Naive thymus-derived CD4-positive, alpha-beta T cell (primary cell): ENCODE measurements at regions of chr2 and their contacts with region 1.

Region 1: GRCh38 chr2:147639891-147640290 is 204.9 kb upstream of the ACVR2A start:
- DNase-seq: no peak
- ATAC-seq: no peak
- H3K4me3 ChIP-seq: no peak overlapping the region
- H3K4me3 Mint-ChIP-seq: no peak overlapping the region
- H3K27ac ChIP-seq: no peak overlapping the region
- H3K27ac Mint-ChIP-seq: no peak overlapping the region
- H3K4me1 ChIP-seq: no peaks in the 10 kb centered on the region
- H3K4me1 Mint-ChIP-seq: peaks cover 0 to 14% (median 4%) of the 10 kb centered on the region in 7 donors
- H3K27me3 ChIP-seq: no peaks in the 10 kb centered on the region
- H3K27me3 Mint-ChIP-seq: peaks cover 0 to 3% (median 0%) of the 10 kb centered on the region in 5 donors

Region 2: DNA sequence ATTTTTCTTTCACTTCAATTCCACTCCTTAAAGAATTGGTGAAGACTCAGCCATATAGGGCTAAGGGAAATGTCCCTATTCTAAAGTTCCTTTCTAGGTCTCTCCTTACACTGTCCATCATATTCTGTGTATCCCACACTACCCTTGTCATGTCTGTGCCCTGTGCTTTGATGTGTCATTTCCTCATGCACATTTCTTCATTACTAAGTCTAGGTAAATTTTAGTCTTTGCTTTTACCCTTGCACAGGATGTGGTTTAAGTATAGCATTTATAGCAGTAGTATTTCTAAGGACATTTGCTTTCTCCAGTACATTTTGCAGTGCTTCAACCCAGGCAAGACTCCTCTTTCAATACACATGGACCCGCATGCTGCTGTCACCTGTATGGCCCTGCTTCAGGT is 16.6 kb before region 1 on chr2:
- CTCF ChIA-PET with region 1: interaction called, 3 read pairs
- POLR2A ChIA-PET with region 1: no interaction called
- intact Hi-C with region 1: loop called in 1 of 2 experiments (anchors 2 kb)
- DNase-seq: peak in 7 of 9 donors; percentile 12 to 64 (median 41)
- ATAC-seq: peak; percentile 88
- H3K4me3 ChIP-seq: no peak overlapping the region
- H3K4me3 Mint-ChIP-seq: peak overlapping the region; percentile 1 to 63 (median 37)
- H3K27ac ChIP-seq: no peak overlapping the region
- H3K27ac Mint-ChIP-seq: peak overlapping the region; percentile 4 to 76 (median 36)
- H3K4me1 ChIP-seq: peaks cover 0 to 23% of the 10 kb centered on the region in 2 donors
- H3K4me1 Mint-ChIP-seq: peaks cover 12 to 36% (median 25%) of the 10 kb centered on the region in 7 donors
- H3K27me3 ChIP-seq: no peaks in the 10 kb centered on the region
- H3K27me3 Mint-ChIP-seq: no peaks in the 10 kb centered on the region

Region 3: GRCh38 chr2:147968571-147968970 is 328.7 kb after region 1 on chr2:
- CTCF ChIA-PET with region 1: no interaction called
- POLR2A ChIA-PET with region 1: no interaction called
- intact Hi-C with region 1: no loop called
- DNase-seq: no peak
- ATAC-seq: no peak
- H3K4me3 ChIP-seq: no peak overlapping the region
- H3K4me3 Mint-ChIP-seq: no peak overlapping the region
- H3K27ac ChIP-seq: no peak overlapping the region
- H3K27ac Mint-ChIP-seq: peak overlapping the region in 1 of 9 donors; percentile 22
- H3K4me1 ChIP-seq: no peaks in the 10 kb centered on the region
- H3K4me1 Mint-ChIP-seq: peaks cover 0 to 33% (median 8%) of the 10 kb centered on the region in 7 donors
- H3K27me3 ChIP-seq: no peaks in the 10 kb centered on the region
- H3K27me3 Mint-ChIP-seq: no peaks in the 10 kb centered on the region

Region 4: GRCh38 chr2:148860037-148860436 is 1220.1 kb after region 1 on chr2:
- CTCF ChIA-PET with region 1: no interaction called
- POLR2A ChIA-PET with region 1: no interaction called
- intact Hi-C with region 1: no loop called
- DNase-seq: no peak
- ATAC-seq: no peak
- H3K4me3 ChIP-seq: no peak overlapping the region
- H3K4me3 Mint-ChIP-seq: no peak overlapping the region
- H3K27ac ChIP-seq: no peak overlapping the region
- H3K27ac Mint-ChIP-seq: no peak overlapping the region
- H3K4me1 ChIP-seq: no peaks in the 10 kb centered on the region
- H3K4me1 Mint-ChIP-seq: peaks cover 0 to 2% (median 0%) of the 10 kb centered on the region in 7 donors
- H3K27me3 ChIP-seq: no peaks in the 10 kb centered on the region
- H3K27me3 Mint-ChIP-seq: peaks cover 5 to 35% (median 15%) of the 10 kb centered on the region in 5 donors